Caco-2 (cell line): ENCODE measurements at regions of chr17 and their contacts with region 1.

Region 1: DNA sequence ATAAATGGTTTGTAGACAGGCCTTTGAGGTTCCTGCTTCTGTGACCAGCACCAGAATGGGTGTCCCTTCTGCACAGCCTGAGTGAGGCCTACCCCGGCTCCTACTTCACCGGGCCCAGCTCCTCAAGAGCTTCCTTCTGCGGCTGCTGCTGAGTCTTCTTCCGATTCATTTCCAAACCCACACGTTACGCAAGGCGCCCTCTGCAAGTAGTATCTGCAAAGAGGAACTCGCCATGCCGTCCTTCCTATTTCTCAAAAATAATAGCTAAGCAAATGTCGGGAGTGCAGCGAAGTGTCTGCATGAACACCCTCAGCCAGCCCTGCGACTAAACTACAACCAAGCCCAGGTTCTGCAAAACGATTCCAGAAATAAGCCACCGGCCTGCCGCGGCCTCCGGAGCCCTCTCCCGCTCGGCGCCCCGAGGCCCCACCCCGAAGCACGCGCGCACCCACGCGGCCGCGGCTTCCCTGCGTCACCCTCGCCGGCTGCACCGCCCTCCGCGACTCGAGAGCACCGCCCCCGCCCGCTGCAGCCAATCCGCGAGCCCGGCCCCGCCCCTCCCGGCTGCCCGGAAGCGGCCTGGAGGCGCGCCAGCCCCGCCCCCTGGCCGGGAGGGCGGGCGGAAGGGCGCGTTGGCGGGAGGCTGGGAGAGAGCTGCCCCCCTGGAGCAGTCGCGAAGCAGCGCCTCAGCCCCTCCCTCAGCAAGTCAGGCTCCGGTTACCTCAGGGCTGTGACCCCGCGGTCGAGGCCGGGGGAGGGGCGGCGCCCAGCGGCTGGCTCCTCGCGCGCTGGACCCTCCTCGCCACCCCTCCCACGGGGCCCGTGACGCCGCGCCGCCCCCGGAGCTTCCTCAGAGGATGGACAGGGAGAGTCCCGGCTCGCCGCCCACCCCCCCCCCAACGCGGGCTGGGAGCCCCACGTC is 8.3 kb downstream of the MNT start:
- DNase-seq: peak; percentile 96 to 99
- H3K4me3 ChIP-seq: peak overlapping the region; percentile 96
- H3K4me3 Mint-ChIP-seq: peak overlapping the region; percentile 84
- H3K27ac Mint-ChIP-seq: peak overlapping the region; percentile 85
- H3K4me1 ChIP-seq: peaks cover 29% of the 10 kb centered on the region
- H3K4me1 Mint-ChIP-seq: peaks cover 17% of the 10 kb centered on the region
- H3K27me3 ChIP-seq: no peaks in the 10 kb centered on the region
- H3K27me3 Mint-ChIP-seq: no peaks in the 10 kb centered on the region
- CTCF ChIP-seq: no peak

Region 2: GRCh38 chr17:2336215-2336851 is 56.2 kb before region 1 on chr17 and contains the start of gene TSR1:
- CTCF ChIA-PET with region 1: no interaction called
- POLR2A ChIA-PET with region 1: interaction called, 10 read pairs
- intact Hi-C with region 1: no loop called
- DNase-seq: peak; percentile 93 to 95
- H3K4me3 ChIP-seq: peak within 1 kb of the TSS; percentile 72
- H3K4me3 Mint-ChIP-seq: peak within 1 kb of the TSS; percentile 99
- H3K27ac Mint-ChIP-seq: peak within 1 kb of the TSS; percentile 95
- H3K4me1 ChIP-seq: peaks cover 13% of the 10 kb centered on the region; the same call in 1 of the 2 replicates
- H3K4me1 Mint-ChIP-seq: peaks cover 6% of the 10 kb centered on the region
- H3K27me3 ChIP-seq: no peaks in the 10 kb centered on the region
- H3K27me3 Mint-ChIP-seq: no peaks in the 10 kb centered on the region
- CTCF ChIP-seq: peak in 1 of 2 experiments; percentile 46
- total RNA-seq, gene TSR1: 65.4 and 67.3 TPM in 2 replicates

Region 3: DNA sequence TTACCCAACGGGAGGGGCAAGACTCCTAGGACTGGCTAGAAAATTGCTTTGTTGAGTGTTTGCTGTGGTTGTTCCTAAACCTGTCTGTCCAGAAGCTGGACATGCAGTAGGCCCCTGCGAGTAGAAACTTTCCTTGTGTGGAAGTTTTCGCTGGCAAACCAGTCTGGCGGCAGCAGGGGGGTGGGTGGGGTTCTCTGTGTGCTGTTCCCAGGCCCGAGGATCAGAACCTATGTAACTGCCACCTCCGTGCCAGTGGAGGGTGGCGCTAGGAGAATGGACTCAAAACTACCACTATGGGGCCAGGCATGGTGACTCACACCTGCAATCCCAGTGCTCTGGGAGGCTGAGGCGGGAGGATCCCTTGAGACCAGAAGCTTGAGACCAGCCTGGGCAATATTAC is 46.0 kb before region 1 on chr17:
- CTCF ChIA-PET with region 1: no interaction called
- POLR2A ChIA-PET with region 1: no interaction called
- intact Hi-C with region 1: no loop called
- DNase-seq: peak in 1 of 2 experiments; percentile 65
- H3K4me3 ChIP-seq: no peak overlapping the region
- H3K4me3 Mint-ChIP-seq: no peak overlapping the region
- H3K27ac Mint-ChIP-seq: peak overlapping the region; percentile 63
- H3K4me1 ChIP-seq: peaks cover 29% of the 10 kb centered on the region
- H3K4me1 Mint-ChIP-seq: peaks cover 21% of the 10 kb centered on the region
- H3K27me3 ChIP-seq: no peaks in the 10 kb centered on the region
- H3K27me3 Mint-ChIP-seq: no peaks in the 10 kb centered on the region
- CTCF ChIP-seq: no peak

Region 4: DNA sequence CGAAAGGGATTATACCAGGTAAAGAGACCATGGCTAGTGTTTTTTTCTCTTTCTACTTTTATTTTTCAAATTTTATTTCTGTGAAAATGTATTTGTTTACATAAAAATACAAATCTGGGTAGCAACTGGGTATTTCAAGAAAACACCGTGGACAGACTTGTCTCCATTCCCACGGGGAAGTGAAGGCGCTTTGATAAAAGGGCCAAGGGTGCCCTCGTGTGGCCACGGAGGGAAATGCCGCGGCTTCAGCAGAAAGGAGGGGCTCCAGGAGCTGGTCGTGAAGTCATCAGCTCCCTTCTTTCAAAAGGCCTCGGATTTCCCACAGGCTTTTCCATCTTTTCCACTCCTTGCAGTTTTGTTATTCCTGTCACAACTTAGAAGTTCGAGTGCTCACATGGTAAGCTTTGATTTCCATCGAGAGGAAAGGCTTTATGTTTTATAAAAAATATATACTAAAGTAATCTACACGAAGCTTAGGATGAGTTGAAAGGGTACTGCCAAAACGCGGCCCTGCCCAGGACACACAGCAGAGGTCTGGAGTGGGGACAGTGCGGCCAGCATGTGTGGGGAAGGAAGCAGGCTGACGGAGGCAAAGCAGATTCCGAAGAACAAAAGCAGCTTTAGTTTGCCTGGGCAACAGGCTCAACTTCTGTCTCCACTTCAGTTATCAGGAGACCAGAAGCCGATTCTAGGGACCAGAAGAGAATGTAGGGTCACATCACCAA is 23.7 kb after region 1 on chr17:
- CTCF ChIA-PET with region 1: interaction called, 33 read pairs
- POLR2A ChIA-PET with region 1: interaction called, 5 read pairs
- intact Hi-C with region 1: no loop called
- DNase-seq: peak; percentile 85 to 92
- H3K4me3 ChIP-seq: no peak overlapping the region
- H3K4me3 Mint-ChIP-seq: no peak overlapping the region
- H3K27ac Mint-ChIP-seq: no peak overlapping the region
- H3K4me1 ChIP-seq: no peaks in the 10 kb centered on the region
- H3K4me1 Mint-ChIP-seq: no peaks in the 10 kb centered on the region
- H3K27me3 ChIP-seq: no peaks in the 10 kb centered on the region
- H3K27me3 Mint-ChIP-seq: no peaks in the 10 kb centered on the region
- CTCF ChIP-seq: peak; percentile 97 to 98

Region 5: GRCh38 chr17:2613089-2613808 is 220.7 kb after region 1 on chr17:
- CTCF ChIA-PET with region 1: no interaction called
- POLR2A ChIA-PET with region 1: no interaction called
- intact Hi-C with region 1: no loop called
- DNase-seq: no peak
- H3K4me3 ChIP-seq: no peak overlapping the region
- H3K4me3 Mint-ChIP-seq: no peak overlapping the region
- H3K27ac Mint-ChIP-seq: no peak overlapping the region
- H3K4me1 ChIP-seq: peaks cover 7% of the 10 kb centered on the region; the same call in 1 of the 2 replicates
- H3K4me1 Mint-ChIP-seq: peaks cover 14% of the 10 kb centered on the region
- H3K27me3 ChIP-seq: no peaks in the 10 kb centered on the region
- H3K27me3 Mint-ChIP-seq: no peaks in the 10 kb centered on the region
- CTCF ChIP-seq: no peak